CD4-positive, alpha-beta memory T cell (primary cell): ENCODE measurements at regions of chr15 and their contacts with region 1.

Region 1: DNA sequence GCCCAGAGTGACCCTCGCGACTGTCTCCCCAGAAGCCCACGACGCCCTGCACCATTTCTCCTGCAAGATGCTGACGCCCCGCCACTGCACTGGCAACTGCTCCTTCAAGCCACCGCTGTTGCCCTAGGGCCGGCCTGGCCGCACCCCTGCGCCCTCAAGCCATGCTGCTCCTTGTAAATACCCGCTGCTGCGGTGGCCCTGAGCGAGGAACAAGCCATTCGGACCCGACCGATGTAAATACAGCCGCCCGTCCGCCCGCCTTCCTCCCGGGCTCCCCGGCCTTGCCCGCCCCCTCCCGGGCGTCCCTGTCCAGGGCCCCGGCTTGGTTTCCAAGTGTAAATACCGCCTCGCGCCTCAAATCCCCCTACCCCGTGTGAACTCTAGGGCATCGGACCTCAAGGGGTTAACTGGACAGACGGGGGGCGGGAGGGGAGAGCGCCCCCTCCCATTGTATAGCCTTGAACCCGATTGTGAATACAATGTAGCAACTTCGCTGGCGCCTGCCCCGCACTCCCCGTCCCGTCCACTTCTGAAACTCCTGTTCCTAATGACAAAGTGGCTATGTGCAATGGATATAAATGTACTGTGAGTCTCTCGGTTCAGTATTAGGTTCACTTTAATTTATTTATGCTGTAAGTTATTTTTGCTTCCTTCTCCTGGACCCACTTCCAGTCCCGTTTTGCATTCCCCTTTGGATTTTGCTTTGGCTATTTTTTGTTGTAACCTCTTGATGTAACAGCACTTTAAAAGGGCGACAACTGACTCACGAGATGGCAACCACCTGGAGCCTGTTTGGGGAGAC is 5.9 kb downstream of the RNU6-1 start:
- DNase-seq: peak in 1 of 5 donors; percentile 39
- H3K4me3 ChIP-seq: peak overlapping the region; percentile 35 to 47
- H3K4me3 Mint-ChIP-seq: peak overlapping the region; percentile 83 to 95 (median 88)
- H3K27ac ChIP-seq: no peak overlapping the region
- H3K27ac Mint-ChIP-seq: peak overlapping the region in 1 of 7 donors; percentile 91
- H3K4me1 ChIP-seq: peaks cover 61% of the 10 kb centered on the region
- H3K4me1 Mint-ChIP-seq: peaks cover 25 to 86% (median 47%) of the 10 kb centered on the region in 4 donors
- H3K27me3 ChIP-seq: peaks cover 48% of the 10 kb centered on the region
- H3K27me3 Mint-ChIP-seq: peaks cover 42 to 50% of the 10 kb centered on the region in 2 donors

Region 2: DNA sequence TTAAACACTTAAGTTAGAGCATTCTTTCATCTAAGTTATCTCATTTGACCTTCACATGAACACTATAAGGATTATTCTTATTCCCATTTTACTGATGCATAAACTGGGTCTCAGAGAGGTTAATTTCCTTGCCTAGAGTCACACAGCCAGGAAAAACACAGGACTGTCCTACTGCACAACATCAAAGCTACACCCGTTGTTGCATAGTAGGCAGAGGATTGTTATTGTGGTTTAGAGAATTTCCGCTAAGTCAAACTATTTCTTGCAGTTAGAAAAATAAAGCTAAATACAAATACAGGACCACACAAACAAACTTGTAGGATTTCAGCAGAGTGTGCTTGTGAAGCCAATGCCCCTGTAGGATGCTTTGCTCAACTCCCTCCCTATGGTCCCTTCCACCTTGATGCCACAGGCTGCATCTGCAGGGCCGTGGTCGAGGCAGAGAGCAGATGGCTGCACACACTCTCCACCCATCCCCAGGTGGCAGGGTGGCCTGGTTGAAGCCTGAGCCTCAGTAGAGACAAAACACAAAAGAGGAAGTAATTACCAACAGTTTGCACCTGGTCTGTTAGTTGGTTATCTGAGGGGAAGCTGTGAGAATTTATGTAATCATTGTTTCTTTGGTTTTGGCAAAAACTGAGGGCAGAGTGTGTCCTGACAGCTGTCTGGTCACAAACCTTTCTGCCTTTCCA is 49.7 kb before region 1 on chr15:
- CTCF ChIA-PET with region 1: interaction called, 84 read pairs
- POLR2A ChIA-PET with region 1: interaction called, 82 read pairs
- intact Hi-C with region 1: loop called (anchors 1 kb)
- DNase-seq: peak in 4 of 5 donors; percentile 8 to 33 (median 26)
- H3K4me3 ChIP-seq: no peak overlapping the region
- H3K4me3 Mint-ChIP-seq: peak overlapping the region in 7 of 8 donors; percentile 26 to 74 (median 61)
- H3K27ac ChIP-seq: no peak overlapping the region
- H3K27ac Mint-ChIP-seq: peak overlapping the region; percentile 20 to 87 (median 82)
- H3K4me1 ChIP-seq: peaks cover 38% of the 10 kb centered on the region
- H3K4me1 Mint-ChIP-seq: peaks cover 21 to 31% (median 24%) of the 10 kb centered on the region in 4 donors
- H3K27me3 ChIP-seq: no peaks in the 10 kb centered on the region
- H3K27me3 Mint-ChIP-seq: no peaks in the 10 kb centered on the region